CD4-positive, alpha-beta T cell (primary cell): ENCODE measurements at regions of chr19 and their contacts with region 1.

Region 1: GRCh38 chr19:42283143-42284065 is 14.4 kb downstream of the CIC start:
- DNase-seq: peak; percentile 92 to 99 (median 97)
- ATAC-seq: peak; percentile 62
- H3K4me3 ChIP-seq: peak overlapping the region; percentile 55
- H3K4me3 Mint-ChIP-seq: no peak overlapping the region
- H3K27ac ChIP-seq: peak overlapping the region; percentile 86 to 88
- H3K27ac Mint-ChIP-seq: no peak overlapping the region
- H3K4me1 ChIP-seq: peaks cover 71% of the 10 kb centered on the region
- H3K4me1 Mint-ChIP-seq: peaks cover 43% of the 10 kb centered on the region
- H3K27me3 ChIP-seq: no peaks in the 10 kb centered on the region
- H3K27me3 Mint-ChIP-seq: no peaks in the 10 kb centered on the region
- CTCF ChIP-seq: no peak

Region 2: DNA sequence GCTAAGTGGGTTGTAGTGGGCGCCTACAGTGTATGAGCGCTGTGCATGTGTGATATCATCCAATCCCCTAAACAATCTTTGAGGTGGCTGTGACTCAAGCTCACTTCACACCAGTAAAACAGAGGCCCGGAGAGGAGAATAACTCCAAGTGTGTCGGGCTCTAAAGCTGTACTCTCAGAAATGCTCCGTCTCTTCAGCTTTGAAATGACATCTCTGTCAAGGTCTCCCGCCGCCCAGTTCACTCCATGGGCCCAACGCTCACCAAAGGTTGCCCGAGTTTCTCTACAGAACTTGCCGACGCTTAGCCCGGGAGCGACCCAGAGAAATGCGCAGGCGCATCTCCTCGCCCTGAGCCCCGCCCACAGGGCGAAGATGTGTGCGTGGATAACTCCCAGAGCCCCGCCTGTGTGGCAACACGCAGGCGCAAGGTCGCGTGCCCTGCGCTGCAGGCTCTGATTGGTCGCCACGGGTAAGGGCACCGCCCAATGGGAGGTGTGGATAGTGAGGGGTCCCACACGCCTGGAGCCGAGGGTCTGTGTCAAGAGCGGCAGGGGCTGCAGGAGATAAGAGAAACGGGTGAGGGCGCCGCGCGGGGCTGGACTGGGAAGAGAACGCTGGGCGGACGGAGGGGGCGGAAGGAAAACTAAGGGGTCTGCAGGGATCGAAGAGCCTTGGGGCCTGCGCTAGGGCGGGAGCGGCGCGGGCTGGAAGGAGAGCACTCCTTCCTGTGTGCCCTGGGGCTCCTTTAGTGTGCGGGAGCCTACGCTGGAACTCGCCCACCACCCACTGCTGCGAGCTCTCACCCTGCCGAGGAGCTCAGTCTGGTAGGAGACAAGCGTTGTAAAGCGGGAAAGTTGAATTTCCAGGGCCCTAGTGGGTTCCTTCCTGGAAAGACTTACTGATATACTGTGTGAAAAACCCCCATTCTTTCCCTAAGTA is 63.3 kb before region 1 on chr19 and contains the start of gene ZNF526:
- CTCF ChIA-PET with region 1: no interaction called
- POLR2A ChIA-PET with region 1: interaction called, 8 read pairs
- intact Hi-C with region 1: loop called in 1 of 2 experiments (anchors 2 kb)
- DNase-seq: peak; percentile 93 to 99 (median 96)
- ATAC-seq: peak; percentile 80
- H3K4me3 ChIP-seq: peak within 1 kb of the TSS; percentile 98
- H3K4me3 Mint-ChIP-seq: peak within 1 kb of the TSS; percentile 96
- H3K27ac ChIP-seq: peak within 1 kb of the TSS; percentile 70 to 78
- H3K27ac Mint-ChIP-seq: peak within 1 kb of the TSS; percentile 93
- H3K4me1 ChIP-seq: peaks cover 64% of the 10 kb centered on the region
- H3K4me1 Mint-ChIP-seq: peaks cover 58% of the 10 kb centered on the region
- H3K27me3 ChIP-seq: no peaks in the 10 kb centered on the region
- H3K27me3 Mint-ChIP-seq: no peaks in the 10 kb centered on the region
- CTCF ChIP-seq: no peak
- total RNA-seq, gene ZNF526: 5.0 to 6.2 TPM

Region 3: DNA sequence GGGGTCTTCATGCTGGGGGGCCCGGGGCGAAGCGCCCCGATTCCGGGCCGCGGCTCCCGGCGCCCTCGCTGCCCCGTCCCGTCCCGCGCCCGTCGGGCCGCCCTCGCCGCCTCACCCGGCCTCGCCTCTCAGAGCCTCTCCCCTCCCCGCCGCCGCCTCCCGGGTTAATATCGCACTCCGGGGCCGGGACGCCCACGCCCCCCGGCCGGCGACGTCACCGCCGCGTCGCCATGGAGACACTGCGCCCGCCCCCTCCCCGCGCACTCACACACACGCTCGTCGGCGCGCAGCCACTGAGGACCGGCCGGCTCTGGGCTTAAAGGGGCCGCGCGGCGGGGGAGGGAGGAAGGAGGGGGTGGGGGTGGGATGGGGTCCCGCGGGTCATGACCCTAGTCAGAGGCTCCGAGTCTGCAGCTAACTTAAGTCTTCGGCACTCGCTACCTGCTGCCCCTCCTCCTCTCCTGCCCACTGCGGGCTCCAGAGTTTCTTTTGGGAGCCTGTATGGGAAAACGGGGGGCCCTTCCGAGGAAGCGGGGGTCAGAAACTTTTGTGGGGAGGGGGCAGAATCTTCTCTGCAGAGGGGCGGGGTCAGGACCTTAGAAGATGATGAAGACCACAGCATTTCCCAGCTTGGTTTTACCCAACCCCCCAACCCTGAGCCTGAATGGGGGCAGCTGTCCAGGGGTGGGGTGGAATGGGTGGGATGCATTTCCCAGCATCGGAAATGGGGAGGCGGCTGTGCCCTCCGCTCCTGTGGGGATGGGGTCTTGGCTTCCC is 28.2 kb before region 1 on chr19 and contains the start of gene ERF:
- CTCF ChIA-PET with region 1: interaction called, 12 read pairs
- POLR2A ChIA-PET with region 1: interaction called, 5 read pairs
- intact Hi-C with region 1: loop called (anchors 1 to 2 kb)
- DNase-seq: peak; percentile 89 to 98 (median 92)
- ATAC-seq: peak; percentile 75
- H3K4me3 ChIP-seq: peak within 1 kb of the TSS; percentile 100
- H3K4me3 Mint-ChIP-seq: peak within 1 kb of the TSS; percentile 93
- H3K27ac ChIP-seq: peak within 1 kb of the TSS; percentile 97 to 98
- H3K27ac Mint-ChIP-seq: peak within 1 kb of the TSS; percentile 85
- H3K4me1 ChIP-seq: peaks cover 43% of the 10 kb centered on the region
- H3K4me1 Mint-ChIP-seq: peaks cover 28% of the 10 kb centered on the region
- H3K27me3 ChIP-seq: no peaks in the 10 kb centered on the region
- H3K27me3 Mint-ChIP-seq: no peaks in the 10 kb centered on the region
- CTCF ChIP-seq: no peak
- total RNA-seq, gene ERF: 105 to 113 TPM

Region 4: DNA sequence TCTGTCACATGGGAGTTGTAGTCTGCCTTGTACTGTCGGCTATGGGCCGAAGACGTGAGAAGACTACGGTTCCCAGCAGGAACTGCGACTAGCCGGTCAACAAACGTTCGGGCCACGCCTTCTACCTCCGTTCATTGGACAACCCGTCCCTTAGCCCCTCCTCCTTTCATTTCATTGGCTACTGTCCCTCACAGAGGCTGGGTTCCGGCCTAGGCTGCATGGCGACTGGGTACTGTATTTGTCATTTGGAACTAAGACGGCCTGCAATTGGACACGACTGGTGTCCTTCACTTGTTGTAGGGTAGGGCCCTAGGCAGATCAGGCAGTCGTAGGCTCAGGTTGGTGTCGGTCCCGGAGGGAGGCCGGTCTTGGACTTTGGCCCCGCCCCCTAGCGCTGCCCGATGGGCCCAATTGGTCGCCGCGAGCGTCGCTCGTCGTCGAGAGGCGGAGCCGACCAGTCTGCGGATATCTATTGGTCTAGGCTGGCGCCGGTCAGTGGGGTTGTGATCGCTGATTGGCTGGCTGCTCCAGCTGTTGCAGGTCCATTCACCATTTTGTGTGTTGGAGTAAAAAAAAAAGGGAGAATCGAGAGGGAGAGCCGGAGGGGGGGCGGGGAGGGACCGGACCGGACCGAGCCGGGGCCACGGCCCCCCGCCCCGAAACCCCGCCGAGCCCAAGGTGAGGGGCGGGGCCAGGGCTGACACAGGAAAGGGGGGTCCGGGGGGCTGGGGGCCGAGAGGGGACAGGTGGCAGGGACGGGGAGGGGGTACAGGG is 14.5 kb before region 1 on chr19 and contains the start of gene CIC:
- CTCF ChIA-PET with region 1: interaction called, 27 read pairs
- POLR2A ChIA-PET with region 1: interaction called, 44 read pairs
- intact Hi-C with region 1: loop called (anchors 1 kb)
- DNase-seq: peak; percentile 98 to 100 (median 99)
- ATAC-seq: peak; percentile 74
- H3K4me3 ChIP-seq: peak within 1 kb of the TSS; percentile 70
- H3K4me3 Mint-ChIP-seq: peak within 1 kb of the TSS; percentile 92
- H3K27ac ChIP-seq: peak within 1 kb of the TSS; percentile 98 to 99
- H3K27ac Mint-ChIP-seq: no peak within 1 kb of the TSS
- H3K4me1 ChIP-seq: peaks cover 37% of the 10 kb centered on the region
- H3K4me1 Mint-ChIP-seq: peaks cover 22% of the 10 kb centered on the region
- H3K27me3 ChIP-seq: no peaks in the 10 kb centered on the region
- H3K27me3 Mint-ChIP-seq: no peaks in the 10 kb centered on the region
- CTCF ChIP-seq: no peak
- total RNA-seq, gene CIC: 114 to 119 TPM

Region 5: DNA sequence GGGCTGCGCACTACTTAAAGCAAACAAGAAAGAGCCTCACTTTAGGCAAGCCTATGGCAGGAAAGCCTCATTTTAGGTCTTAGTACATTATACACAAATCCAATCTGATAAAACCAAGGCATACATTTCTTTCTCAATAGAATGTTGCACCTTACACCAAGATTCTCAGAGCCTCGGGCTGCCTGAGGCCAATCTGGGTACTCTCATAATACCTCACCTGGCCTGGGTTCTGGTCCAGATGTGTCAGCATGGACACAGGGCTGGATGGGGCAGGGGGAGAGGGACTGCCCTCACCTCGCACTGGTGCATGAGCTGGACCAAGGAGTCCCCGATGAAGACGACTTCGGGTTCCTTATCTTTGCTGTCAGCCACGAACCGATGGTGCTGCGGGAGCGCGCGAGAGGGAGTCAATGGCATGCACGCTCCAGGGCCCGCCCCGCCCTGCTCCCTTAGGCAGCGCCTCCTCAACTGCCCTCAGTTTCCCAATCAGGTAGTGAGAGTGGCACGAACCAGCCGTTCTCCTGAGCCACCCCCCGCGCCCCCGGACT is 18.3 kb after region 1 on chr19 and contains the start of gene PRR19:
- CTCF ChIA-PET with region 1: interaction called, 6 read pairs
- POLR2A ChIA-PET with region 1: interaction called, 9 read pairs
- intact Hi-C with region 1: loop called in 1 of 2 experiments (anchors 2 kb)
- DNase-seq: peak in 3 of 14 experiments; percentile 33 to 52 (median 46)
- ATAC-seq: peak; percentile 15
- H3K4me3 ChIP-seq: peak within 1 kb of the TSS; percentile 91
- H3K4me3 Mint-ChIP-seq: peak within 1 kb of the TSS; percentile 88
- H3K27ac ChIP-seq: peak within 1 kb of the TSS; percentile 29 to 58
- H3K27ac Mint-ChIP-seq: peak within 1 kb of the TSS; percentile 66
- H3K4me1 ChIP-seq: peaks cover 28% of the 10 kb centered on the region
- H3K4me1 Mint-ChIP-seq: peaks cover 26% of the 10 kb centered on the region
- H3K27me3 ChIP-seq: no peaks in the 10 kb centered on the region
- H3K27me3 Mint-ChIP-seq: no peaks in the 10 kb centered on the region
- CTCF ChIP-seq: no peak
- total RNA-seq, gene PRR19: 0.16 TPM in 1 of 2 experiments, not detected in the other

Region 6: DNA sequence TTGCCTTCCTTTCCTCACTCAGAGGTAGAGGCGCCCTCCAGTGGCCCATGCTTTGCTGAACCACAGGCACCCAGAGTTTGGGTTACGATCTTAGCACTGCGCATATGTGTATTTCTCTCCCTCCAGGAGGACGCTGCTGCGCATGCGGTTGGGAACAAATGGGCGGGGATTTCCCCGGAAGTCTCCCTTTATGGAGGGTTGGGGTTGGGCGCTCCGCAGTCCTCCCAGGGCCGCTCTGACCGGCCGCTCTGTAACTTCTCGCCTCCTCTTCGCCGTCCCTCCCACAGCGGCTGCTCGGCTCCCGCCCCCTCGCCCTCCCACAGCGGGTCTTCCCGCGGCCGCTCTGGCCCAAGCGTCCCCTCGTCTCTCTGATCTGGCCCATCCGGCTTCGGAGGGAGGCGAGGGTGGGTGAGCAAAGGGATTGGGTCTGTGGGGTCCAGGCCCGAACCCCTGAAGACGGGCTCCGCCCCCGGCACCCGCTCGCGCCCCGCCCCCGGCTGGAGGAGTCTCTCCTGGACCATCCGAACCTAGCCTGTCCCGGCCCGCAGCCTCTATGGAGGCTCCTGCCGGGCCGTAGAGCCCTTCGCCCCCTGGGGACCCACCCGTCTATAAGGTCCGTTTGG is 42.0 kb after region 1 on chr19 and contains the start of gene MEGF8:
- CTCF ChIA-PET with region 1: interaction called, 3 read pairs
- POLR2A ChIA-PET with region 1: no interaction called
- intact Hi-C with region 1: loop called in 1 of 2 experiments (anchors 1 kb)
- DNase-seq: peak; percentile 97 to 99 (median 98)
- ATAC-seq: peak; percentile 95
- H3K4me3 ChIP-seq: peak within 1 kb of the TSS; percentile 84
- H3K4me3 Mint-ChIP-seq: peak within 1 kb of the TSS; percentile 94
- H3K27ac ChIP-seq: peak within 1 kb of the TSS; percentile 46 to 55
- H3K27ac Mint-ChIP-seq: peak within 1 kb of the TSS; percentile 50
- H3K4me1 ChIP-seq: peaks cover 26% of the 10 kb centered on the region
- H3K4me1 Mint-ChIP-seq: peaks cover 25% of the 10 kb centered on the region
- H3K27me3 ChIP-seq: peaks cover 16 to 21% of the 10 kb centered on the region in 2 experiments
- H3K27me3 Mint-ChIP-seq: peaks cover 25% of the 10 kb centered on the region
- CTCF ChIP-seq: peak; percentile 90
- total RNA-seq, gene MEGF8: 4.1 to 4.2 TPM

Region 7: DNA sequence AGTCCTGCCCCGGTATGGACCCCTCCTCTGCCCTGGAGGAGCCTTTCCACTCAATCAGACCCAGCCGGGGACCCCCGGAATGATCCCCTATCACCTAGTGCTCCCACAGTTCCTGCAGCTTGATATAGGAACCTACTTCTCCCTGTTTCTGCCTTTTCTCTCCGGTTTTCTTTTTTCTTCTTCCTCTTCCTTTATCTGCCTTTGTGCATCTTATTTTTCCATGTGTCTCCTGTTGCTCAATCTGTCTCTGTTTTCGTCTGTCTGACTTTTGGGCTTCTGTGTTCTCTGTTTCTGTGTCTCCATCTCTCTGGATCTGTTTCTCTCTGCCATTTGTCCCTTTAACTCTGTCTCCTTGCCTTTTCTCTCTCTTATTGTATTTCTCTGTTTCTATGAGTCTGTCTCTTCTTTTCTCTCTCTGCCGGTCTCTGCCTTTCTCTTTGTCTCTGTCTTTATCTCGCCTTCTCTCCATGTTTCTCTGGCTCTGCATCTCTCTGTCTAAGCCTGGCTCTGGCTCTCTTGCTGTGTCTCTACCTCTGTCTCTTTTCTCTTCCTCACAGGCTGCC is 52.1 kb after region 1 on chr19:
- CTCF ChIA-PET with region 1: no interaction called
- POLR2A ChIA-PET with region 1: no interaction called
- intact Hi-C with region 1: no loop called
- DNase-seq: no peak
- ATAC-seq: no peak
- H3K4me3 ChIP-seq: no peak overlapping the region
- H3K4me3 Mint-ChIP-seq: no peak overlapping the region
- H3K27ac ChIP-seq: no peak overlapping the region
- H3K27ac Mint-ChIP-seq: no peak overlapping the region
- H3K4me1 ChIP-seq: no peaks in the 10 kb centered on the region
- H3K4me1 Mint-ChIP-seq: no peaks in the 10 kb centered on the region
- H3K27me3 ChIP-seq: no peaks in the 10 kb centered on the region
- H3K27me3 Mint-ChIP-seq: no peaks in the 10 kb centered on the region
- CTCF ChIP-seq: no peak